ENCODE measurements at regions of chr10 and their contacts with region 1.

Region 1: GRCh38 chr10:21953585-21954057 is 49.9 kb downstream of the DNAJC1 start:
- DNase-seq: no peak
- H3K4me3 Mint-ChIP-seq: no peak overlapping the region
- H3K27ac Mint-ChIP-seq: no peak overlapping the region
- H3K4me1 Mint-ChIP-seq: peaks cover 6% of the 10 kb centered on the region
- H3K27me3 Mint-ChIP-seq: peaks cover 2% of the 10 kb centered on the region

Region 2: DNA sequence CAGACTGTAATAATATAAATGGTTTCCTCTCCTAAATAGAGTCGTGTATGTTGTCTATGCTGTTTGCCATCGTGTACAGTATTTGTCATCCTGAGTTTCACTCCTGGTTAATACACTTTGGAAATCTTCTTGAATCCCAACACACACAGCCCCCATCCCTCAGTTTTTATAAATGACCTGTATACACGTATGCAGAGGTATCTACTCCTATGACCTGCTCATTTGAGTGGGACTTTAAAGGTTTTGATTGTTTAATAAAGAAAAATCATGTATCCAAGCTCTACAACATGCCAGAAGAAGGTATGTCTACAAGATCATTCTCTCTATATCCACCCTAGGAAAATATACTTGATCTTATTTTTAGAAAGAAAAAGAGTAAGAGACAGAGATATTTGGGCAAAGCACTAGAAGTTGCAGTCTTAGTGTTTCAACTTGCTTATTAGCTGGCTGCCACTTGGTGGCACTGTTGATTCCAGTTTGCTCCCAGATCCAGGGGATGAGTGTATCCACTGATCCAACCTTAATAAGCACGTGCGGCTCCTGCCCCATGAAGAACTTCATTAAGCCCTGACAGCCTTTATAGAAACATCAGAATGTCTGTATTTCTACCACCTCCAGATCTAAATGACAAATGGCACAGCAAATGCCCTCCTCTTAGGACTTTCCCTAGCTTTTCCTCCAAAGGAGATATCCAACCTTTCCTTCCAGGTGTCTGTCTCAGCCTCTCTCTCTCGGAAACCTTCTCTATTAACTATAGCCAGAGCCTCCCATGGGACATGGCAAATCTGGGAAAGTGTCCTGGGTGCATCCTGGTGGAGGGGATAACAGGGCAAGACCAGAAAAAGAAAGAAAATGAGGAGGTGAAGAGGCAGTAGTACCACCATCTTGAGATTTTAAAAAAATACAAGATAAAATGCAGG is 875.0 kb before region 1 on chr10:
- intact Hi-C with region 1: loop called (anchors 2 kb)
- DNase-seq: no peak
- H3K4me3 Mint-ChIP-seq: no peak overlapping the region
- H3K27ac Mint-ChIP-seq: no peak overlapping the region
- H3K4me1 Mint-ChIP-seq: no peaks in the 10 kb centered on the region
- H3K27me3 Mint-ChIP-seq: no peaks in the 10 kb centered on the region

Region 3: GRCh38 chr10:21278491-21279239 is 675.0 kb before region 1 on chr10:
- intact Hi-C with region 1: loop called (anchors 1 kb)
- DNase-seq: peak; percentile 39
- H3K4me3 Mint-ChIP-seq: no peak overlapping the region
- H3K27ac Mint-ChIP-seq: peak overlapping the region; percentile 27
- H3K4me1 Mint-ChIP-seq: no peaks in the 10 kb centered on the region
- H3K27me3 Mint-ChIP-seq: peaks cover 3% of the 10 kb centered on the region

Region 4: GRCh38 chr10:21732067-21732772 is 221.4 kb before region 1 on chr10:
- intact Hi-C with region 1: loop called (anchors 5 kb)
- DNase-seq: peak; percentile 19
- H3K4me3 Mint-ChIP-seq: no peak overlapping the region
- H3K27ac Mint-ChIP-seq: no peak overlapping the region
- H3K4me1 Mint-ChIP-seq: peaks cover 29% of the 10 kb centered on the region
- H3K27me3 Mint-ChIP-seq: no peaks in the 10 kb centered on the region